Kidney (tissue), 22 donors: ENCODE measurements at regions of chr1 and their contacts with region 1.

Region 1: DNA sequence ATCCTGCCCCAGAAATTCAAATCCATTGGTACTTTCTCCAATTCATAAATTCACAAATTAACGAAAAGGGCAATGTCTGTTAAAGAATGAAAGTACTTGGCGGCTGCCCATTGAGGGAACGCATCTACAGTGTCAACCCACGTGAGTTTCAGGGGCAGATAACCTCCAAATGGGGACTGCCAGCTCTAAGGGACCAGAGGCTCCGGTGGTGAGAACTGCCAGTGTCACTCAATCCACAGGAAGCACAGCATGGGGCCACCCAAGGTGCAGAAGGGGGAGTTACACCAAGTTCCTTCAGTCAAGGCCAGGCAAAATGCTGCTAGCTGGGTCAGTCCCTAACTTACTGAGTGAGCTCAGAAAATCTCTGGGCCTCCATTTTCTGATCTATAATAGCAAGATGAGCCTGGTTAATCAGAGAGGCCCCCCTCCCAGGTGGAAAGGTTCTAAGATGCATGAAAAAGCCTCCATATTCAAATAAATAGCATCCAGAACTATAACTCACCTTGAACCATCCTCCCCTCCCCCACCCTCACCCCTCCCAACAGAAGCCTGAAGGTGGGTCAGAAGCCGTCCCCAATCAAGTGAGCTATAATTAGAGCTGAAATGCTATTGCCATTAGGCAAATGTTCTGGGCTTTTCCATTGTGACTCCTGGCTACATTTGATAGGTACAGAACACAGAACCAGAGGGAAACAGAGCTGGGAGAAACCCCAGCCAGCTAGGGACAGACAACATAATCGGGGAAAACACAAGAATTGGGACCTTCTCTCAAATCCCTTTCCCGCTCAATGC is 41.7 kb downstream of the LRP8 start:
- DNase-seq: peak in 2 of 5 donors; percentile 29 to 32
- H3K4me3 ChIP-seq: no peak overlapping the region
- H3K27ac ChIP-seq: no peak overlapping the region
- H3K4me1 ChIP-seq: no peaks in the 10 kb centered on the region
- H3K27me3 ChIP-seq: no peaks in the 10 kb centered on the region
- CTCF ChIP-seq: no peak

Region 2: GRCh38 chr1:53172426-53173128 is 113.6 kb before region 1 on chr1:
- intact Hi-C with region 1: no loop called
- DNase-seq: peak in 1 of 5 donors; percentile 22
- H3K4me3 ChIP-seq: no peak overlapping the region
- H3K27ac ChIP-seq: no peak overlapping the region
- H3K4me1 ChIP-seq: no peaks in the 10 kb centered on the region
- H3K27me3 ChIP-seq: no peaks in the 10 kb centered on the region
- CTCF ChIP-seq: no peak

Region 3: DNA sequence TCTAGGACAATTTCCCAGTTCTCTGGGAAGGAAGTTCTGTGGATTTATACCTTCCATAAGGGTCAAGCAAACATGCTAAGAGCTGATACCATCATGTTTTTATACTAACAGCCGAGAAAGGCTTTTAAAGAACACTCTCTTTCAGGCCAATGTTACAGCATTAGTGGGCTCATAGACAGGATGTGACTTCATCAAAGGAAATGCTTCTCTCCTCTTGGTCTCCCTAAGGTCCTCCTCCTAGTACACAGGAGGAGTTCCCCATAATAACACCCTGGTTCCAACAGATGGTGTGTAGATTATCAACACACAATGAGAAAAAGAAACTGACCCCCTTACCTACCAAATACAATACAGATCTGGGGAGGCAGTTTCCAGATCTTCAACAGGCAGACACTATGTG is 479.5 kb after region 1 on chr1:
- intact Hi-C with region 1: loop called (anchors 10 kb)
- DNase-seq: no peak
- H3K4me3 ChIP-seq: no peak overlapping the region
- H3K27ac ChIP-seq: no peak overlapping the region
- H3K4me1 ChIP-seq: no peaks in the 10 kb centered on the region
- H3K27me3 ChIP-seq: no peaks in the 10 kb centered on the region
- CTCF ChIP-seq: no peak